H1 (cell line): ENCODE measurements at regions of chr12 and their contacts with region 1.

Region 1: DNA sequence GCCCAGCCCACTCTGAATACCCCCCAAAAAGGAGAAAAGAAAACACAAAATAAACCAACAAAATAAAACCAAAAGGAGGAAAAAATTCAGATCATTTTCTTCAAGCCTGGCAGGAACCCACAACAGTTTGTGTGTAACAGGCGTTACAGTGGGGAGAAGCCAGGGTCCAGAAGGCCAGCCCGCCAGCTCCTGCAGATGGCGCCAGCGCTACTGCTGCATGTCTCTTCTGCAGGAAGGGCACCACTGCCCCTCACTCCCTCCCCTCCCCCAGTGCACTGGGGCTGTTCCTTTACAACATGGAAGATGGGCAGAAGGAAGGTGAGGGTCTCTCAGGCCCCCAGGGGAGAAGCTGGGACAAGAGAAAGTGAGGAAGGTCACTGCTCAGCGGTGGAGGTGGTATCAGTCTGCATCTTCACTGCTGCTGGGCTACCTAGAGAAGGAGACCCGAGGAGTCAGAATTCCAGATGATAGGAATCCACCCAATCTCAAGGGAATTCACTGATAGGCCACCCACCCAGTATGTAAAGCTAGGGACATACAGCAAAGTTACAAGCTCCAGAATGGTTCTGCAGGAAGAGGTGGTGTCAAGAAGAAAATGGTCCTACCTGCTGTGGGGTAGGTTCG is 2.3 kb upstream of the NOP2 start:
- DNase-seq: peak in 1 of 2 experiments; percentile 87
- H3K4me3 ChIP-seq: no peak overlapping the region
- H3K27ac ChIP-seq: no peak overlapping the region; the same call in 1 of the 2 replicates
- H3K4me1 ChIP-seq: peaks cover 0 to 8% (median 4%) of the 10 kb centered on the region in 4 experiments; a peak in 5 of 7 replicates
- H3K27me3 ChIP-seq: no peaks in the 10 kb centered on the region
- CTCF ChIP-seq: peak; percentile 68 to 96 (median 87)
- EP300 ChIP-seq: no peak
- POLR2A ChIP-seq: no peak
- RAD21 ChIP-seq: peak; percentile 32 to 45; a peak in 3 of 4 replicates

Region 2: DNA sequence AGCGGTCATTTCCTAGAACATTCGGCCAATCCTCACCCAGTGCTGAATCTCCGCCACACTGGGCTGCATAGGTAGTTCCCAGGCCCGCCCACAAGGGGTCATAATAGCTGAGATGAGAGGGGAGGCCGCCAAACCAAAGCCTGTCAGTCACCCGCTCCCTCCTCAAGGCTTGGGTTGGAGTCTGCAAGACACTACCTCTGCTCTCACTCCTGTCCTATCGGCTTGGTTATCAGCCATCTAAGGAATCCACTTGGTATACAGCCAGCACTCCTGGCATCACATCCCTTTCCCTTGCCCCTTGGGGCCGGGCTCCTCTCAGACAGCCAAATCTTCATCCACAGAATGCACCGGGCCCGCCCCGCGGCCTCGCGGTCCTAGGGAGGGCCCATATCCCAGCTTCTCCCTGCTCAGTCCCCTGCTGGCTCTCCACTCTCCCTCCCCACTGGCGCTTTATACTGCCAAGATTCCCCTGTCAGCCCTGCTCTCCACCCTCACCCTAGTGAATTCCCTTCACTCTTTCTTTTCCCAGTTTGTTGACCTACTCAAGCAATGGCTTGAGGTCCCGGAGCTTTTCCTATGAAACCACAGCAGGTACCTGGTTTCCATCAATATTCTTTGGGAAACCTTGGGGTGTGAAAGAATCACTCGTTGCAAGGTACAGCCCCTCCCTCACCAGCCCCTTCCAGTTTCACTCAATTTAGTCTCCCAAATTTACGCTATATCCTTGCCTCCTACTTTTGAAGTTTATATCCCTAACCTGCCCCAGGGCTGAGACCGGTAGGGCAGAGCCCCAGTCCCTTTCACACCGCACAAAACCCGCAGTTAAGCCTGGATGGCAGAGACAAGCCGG is 16.0 kb before region 1 on chr12:
- CTCF ChIA-PET with region 1: interaction called, 462 read pairs
- POLR2A ChIA-PET with region 1: interaction called, 46 read pairs
- DNase-seq: peak in 1 of 2 experiments; percentile 93
- H3K4me3 ChIP-seq: peak overlapping the region; percentile 70 to 87 (median 82)
- H3K27ac ChIP-seq: no peak overlapping the region
- H3K4me1 ChIP-seq: peaks cover 4 to 15% (median 9%) of the 10 kb centered on the region in 4 experiments
- H3K27me3 ChIP-seq: no peaks in the 10 kb centered on the region
- CTCF ChIP-seq: peak in 2 of 3 experiments; percentile 68 to 90; a peak in 3 of 4 replicates
- EP300 ChIP-seq: no peak
- POLR2A ChIP-seq: no peak
- RAD21 ChIP-seq: peak; percentile 31 to 47

Region 3: GRCh38 chr12:6582196-6582595 is 11.8 kb after region 1 on chr12:
- CTCF ChIA-PET with region 1: interaction called, 35 read pairs
- POLR2A ChIA-PET with region 1: interaction called, 8 read pairs
- DNase-seq: no peak
- H3K4me3 ChIP-seq: no peak overlapping the region
- H3K27ac ChIP-seq: no peak overlapping the region; the same call in 1 of the 2 replicates
- H3K4me1 ChIP-seq: no peaks in the 10 kb centered on the region
- H3K27me3 ChIP-seq: no peaks in the 10 kb centered on the region
- CTCF ChIP-seq: peak in 2 of 3 experiments; percentile 37 to 55; a peak in 3 of 4 replicates
- EP300 ChIP-seq: no peak
- POLR2A ChIP-seq: no peak
- RAD21 ChIP-seq: peak in 1 of 2 experiments; percentile 13; a peak in 1 of 4 replicates

Region 4: GRCh38 chr12:6592087-6592486 is 21.7 kb after region 1 on chr12:
- CTCF ChIA-PET with region 1: interaction called, 21 read pairs
- POLR2A ChIA-PET with region 1: interaction called, 225 read pairs
- DNase-seq: no peak
- H3K4me3 ChIP-seq: no peak overlapping the region
- H3K27ac ChIP-seq: no peak overlapping the region
- H3K4me1 ChIP-seq: no peaks in the 10 kb centered on the region
- H3K27me3 ChIP-seq: no peaks in the 10 kb centered on the region
- CTCF ChIP-seq: no peak
- EP300 ChIP-seq: no peak
- POLR2A ChIP-seq: no peak
- RAD21 ChIP-seq: no peak

Region 5: GRCh38 chr12:6607751-6608591 is 37.6 kb after region 1 on chr12:
- CTCF ChIA-PET with region 1: interaction called, 5 read pairs
- POLR2A ChIA-PET with region 1: interaction called, 225 read pairs
- DNase-seq: no peak
- H3K4me3 ChIP-seq: peak overlapping the region in 1 of 4 experiments; percentile 17; a peak in 3 of 8 replicates
- H3K27ac ChIP-seq: no peak overlapping the region
- H3K4me1 ChIP-seq: peaks cover 17 to 34% (median 23%) of the 10 kb centered on the region in 4 experiments
- H3K27me3 ChIP-seq: no peaks in the 10 kb centered on the region
- CTCF ChIP-seq: no peak
- EP300 ChIP-seq: no peak
- POLR2A ChIP-seq: no peak
- RAD21 ChIP-seq: no peak